A673 (cell line): ENCODE measurements at regions of chr11 and their contacts with region 1.

Region 1: DNA sequence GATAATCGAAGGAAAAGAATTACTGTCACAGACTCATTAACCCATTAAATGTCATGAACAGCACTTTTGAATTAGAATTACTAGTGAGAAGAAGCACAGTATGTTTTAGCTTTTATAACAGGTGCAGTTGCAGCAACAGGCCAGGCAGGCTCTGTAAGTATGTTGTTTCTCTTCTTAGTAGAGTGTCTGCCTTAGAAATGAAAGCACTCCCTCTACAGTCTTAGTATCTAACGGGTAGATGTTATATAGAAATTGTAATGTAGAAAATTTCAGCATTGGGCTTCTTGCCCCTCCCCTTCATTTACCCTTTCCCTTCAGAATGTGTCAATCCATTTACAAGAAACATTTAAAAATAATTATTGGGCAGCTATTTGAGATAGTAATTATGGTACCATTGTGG is 87.4 kb downstream of the HIPK3 start:
- DNase-seq: peak; percentile 37
- H3K4me3 ChIP-seq: no peak overlapping the region
- H3K27ac ChIP-seq: no peak overlapping the region
- H3K4me1 ChIP-seq: no peaks in the 10 kb centered on the region
- H3K27me3 ChIP-seq: no peaks in the 10 kb centered on the region
- CTCF ChIP-seq: 0 out of 2 replicates have a peak, but pooled peaks have one; percentile 37

Region 2: DNA sequence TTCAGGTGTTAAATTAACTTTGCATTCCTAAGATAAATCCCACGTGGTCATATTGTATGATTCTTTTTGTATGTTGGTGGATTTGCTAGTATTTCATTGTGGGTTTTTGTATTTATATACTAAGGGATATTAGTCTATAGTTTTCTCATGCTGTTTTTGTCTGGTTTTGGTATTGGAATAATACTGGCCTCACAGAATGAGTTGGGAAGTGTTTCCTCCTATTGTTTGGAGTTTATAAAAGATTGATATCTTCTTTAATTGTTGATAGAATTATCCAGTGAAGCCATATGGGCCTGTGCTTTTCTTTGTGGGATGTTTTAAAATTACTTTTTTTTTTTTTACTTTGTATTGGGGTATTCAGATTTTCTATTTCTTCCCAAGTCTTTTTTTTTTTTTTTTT is 392.2 kb before region 1 on chr11:
- CTCF ChIA-PET with region 1: no interaction called
- POLR2A ChIA-PET with region 1: interaction called, 11 read pairs
- intact Hi-C with region 1: no loop called
- DNase-seq: no peak
- H3K4me3 ChIP-seq: no peak overlapping the region
- H3K27ac ChIP-seq: no peak overlapping the region
- H3K4me1 ChIP-seq: no peaks in the 10 kb centered on the region
- H3K27me3 ChIP-seq: no peaks in the 10 kb centered on the region
- CTCF ChIP-seq: no peak